PC-9 (cell line): ENCODE measurements at regions of chr12 and their contacts with region 1.

Region 1: DNA sequence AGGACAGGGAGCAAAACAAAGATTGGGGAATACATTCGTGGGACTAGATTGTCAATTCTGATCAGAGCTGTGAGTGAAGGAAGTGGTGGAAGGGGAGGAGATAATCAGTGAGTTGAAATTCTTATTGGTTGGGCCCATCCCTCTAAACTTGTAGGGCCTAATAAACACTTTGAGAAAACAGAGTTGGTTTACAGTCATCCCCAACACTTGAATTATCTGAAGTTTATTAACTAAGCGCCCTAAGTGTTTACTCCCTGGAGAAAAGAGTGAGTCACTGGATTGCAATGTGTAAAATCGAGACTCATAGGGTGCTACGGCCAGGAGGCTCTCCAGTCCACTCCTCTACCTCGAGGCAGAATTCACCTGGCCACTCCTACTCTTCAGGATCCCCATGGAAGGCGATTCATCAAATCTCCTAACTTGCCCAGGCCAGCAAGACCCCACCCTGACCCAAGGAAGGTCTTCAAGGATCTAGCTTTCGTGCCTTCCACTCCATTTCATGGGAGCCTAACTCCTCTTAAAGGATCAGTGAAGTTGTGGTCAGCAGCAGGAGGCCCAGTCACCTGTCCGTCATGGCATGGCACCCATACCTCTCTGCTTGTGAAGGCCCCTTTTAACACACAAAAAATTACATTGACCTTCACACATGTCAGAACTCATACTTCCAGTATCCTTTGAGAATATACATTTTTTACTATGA is 3.3 kb upstream of the KRT3 start:
- DNase-seq: peak; percentile 67 to 97
- H3K4me3 ChIP-seq: no peak overlapping the region
- H3K27ac ChIP-seq: peak overlapping the region; percentile 88
- H3K4me1 ChIP-seq: peaks cover 65% of the 10 kb centered on the region
- H3K27me3 ChIP-seq: no peaks in the 10 kb centered on the region
- CTCF ChIP-seq: no peak

Region 2: GRCh38 chr12:52672321-52672933 is 126.8 kb before region 1 on chr12:
- CTCF ChIA-PET with region 1: no interaction called
- POLR2A ChIA-PET with region 1: no interaction called
- intact Hi-C with region 1: loop called (anchors 1 kb)
- DNase-seq: peak; percentile 55 to 98
- H3K4me3 ChIP-seq: no peak overlapping the region
- H3K27ac ChIP-seq: peak overlapping the region; percentile 86
- H3K4me1 ChIP-seq: peaks cover 35% of the 10 kb centered on the region
- H3K27me3 ChIP-seq: no peaks in the 10 kb centered on the region
- CTCF ChIP-seq: no peak

Region 3: GRCh38 chr12:52715416-52715815 is 83.8 kb before region 1 on chr12:
- CTCF ChIA-PET with region 1: no interaction called
- POLR2A ChIA-PET with region 1: interaction called, 21 read pairs
- intact Hi-C with region 1: no loop called
- DNase-seq: no peak
- H3K4me3 ChIP-seq: no peak overlapping the region
- H3K27ac ChIP-seq: no peak overlapping the region
- H3K4me1 ChIP-seq: no peaks in the 10 kb centered on the region
- H3K27me3 ChIP-seq: no peaks in the 10 kb centered on the region
- CTCF ChIP-seq: no peak

Region 4: DNA sequence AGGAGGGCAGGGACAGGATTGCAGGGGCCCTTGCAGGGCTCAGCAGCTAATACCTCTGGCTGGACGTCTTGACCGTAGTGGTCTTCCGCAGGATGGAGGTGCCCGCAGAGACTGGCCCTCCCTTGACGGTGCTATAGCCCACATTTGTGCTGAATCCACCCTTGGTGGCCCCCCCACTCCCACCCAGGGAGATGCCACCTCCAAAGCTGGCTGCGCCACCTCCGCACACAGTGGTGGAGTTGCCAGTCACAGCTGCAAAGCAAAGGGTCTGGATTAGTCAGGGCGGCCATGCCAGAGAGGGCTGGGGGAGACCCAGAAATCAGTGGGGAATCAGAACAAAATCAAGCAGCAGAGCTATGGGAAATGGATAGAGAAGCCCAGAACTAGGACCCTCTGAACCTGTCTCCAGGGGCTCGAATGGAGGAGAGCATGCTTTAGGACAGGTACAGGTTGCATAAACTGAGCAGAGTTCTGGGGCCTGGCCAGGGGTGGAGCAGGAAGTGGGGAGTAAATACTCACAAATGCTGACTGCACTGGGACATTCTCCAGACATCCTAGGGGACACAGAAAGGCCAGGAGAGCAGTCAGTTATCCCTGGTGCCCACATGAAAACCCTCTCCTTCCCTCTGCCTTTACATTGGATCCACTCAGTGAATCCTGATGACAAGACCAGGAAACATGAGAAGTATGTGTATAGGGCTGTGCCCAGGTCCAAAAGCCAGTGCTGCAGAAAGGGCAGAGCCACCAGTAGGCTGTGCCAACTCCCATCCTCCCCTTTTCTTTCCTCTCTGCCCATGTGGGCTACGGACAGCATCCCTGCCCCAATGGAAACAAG is 22.8 kb after region 1 on chr12:
- CTCF ChIA-PET with region 1: no interaction called
- POLR2A ChIA-PET with region 1: no interaction called
- intact Hi-C with region 1: no loop called
- DNase-seq: peak in 1 of 2 experiments; percentile 26
- H3K4me3 ChIP-seq: no peak overlapping the region
- H3K27ac ChIP-seq: no peak overlapping the region
- H3K4me1 ChIP-seq: peaks cover 10% of the 10 kb centered on the region
- H3K27me3 ChIP-seq: no peaks in the 10 kb centered on the region; the same call in 1 of the 2 replicates
- CTCF ChIP-seq: no peak

Region 5: DNA sequence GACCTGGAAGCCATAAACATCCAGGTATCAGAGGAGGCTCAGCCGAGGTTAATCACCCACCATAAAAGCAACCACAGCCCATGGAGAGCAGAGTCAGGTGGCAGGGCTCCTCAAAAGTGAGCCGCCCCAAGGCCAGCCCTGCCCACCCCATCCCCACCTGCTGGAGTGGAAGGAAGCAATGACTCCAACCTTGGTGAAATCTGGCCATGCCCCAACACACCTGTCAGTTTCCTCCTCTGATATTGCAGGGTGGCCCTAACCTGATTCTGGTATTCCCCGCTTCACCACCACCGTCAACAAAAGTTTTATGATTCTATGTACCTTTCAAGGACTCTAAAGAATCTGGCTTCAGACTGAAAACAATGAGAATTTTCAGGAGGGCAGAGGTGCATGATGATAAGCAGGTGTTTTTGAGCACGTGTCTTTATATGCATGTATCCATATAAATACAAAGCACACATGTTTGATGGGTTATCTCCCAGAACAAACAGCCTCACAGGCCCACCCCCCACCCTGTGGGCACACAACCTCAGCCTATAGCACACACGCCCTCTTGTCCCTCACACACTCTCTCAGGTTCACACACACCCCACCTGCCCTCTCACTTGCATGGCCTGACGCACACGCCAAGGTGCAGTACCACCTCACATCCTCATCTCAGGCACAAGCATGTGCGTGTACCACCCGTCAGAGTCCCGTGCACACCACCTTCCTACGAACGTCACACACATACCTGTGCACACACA is 114.0 kb after region 1 on chr12:
- CTCF ChIA-PET with region 1: no interaction called
- POLR2A ChIA-PET with region 1: no interaction called
- intact Hi-C with region 1: no loop called
- DNase-seq: no peak
- H3K4me3 ChIP-seq: no peak overlapping the region
- H3K27ac ChIP-seq: no peak overlapping the region
- H3K4me1 ChIP-seq: peaks cover 27% of the 10 kb centered on the region
- H3K27me3 ChIP-seq: no peaks in the 10 kb centered on the region
- CTCF ChIP-seq: no peak